PC-9 (cell line): ENCODE measurements at regions of chr15 and their contacts with region 1.

Region 1: DNA sequence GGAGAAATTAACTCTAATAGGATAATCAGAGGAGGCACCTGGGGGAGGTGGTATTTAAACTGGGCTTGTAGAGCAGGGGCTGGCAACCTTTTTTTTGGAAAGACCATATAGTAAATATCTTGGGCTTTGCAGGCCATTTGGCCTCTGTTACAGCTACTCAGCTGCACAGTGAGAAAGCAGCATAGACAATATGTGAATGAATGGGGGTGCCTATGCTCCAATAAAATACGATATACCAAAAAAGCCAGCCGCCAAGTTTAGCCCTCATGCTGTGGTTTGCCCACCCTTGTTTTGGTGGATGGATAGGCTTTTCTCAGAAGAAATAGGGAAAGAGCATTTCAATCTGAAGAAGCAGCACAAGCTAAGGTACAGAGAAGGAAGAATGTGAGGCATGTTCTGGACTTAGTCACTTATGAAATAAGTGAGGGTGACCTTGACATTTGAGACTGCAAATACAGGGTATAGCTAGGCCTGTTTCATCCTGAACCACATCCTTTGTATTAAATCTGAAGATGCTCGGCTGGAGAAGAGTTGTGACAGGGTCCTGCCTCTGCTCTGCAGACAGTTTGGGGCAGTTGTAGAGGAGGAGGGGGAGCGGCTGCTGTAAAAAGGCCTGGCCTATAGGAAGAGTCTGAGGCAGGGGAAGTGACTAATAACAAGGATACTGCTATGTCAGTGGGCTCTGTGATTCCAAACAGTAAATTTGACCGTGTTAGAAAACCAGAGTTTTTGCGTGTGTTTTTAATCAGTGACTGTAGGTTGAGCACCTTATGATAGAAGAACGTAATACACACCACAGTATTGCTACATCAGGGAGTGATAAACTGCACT is 130.9 kb upstream of the NR2E3 start:
- DNase-seq: peak in 1 of 2 experiments; percentile 43
- H3K4me3 ChIP-seq: peak overlapping the region; percentile 42; the same call in 1 of the 2 replicates
- H3K27ac ChIP-seq: peak overlapping the region; percentile 78
- H3K4me1 ChIP-seq: peaks cover 59% of the 10 kb centered on the region
- H3K27me3 ChIP-seq: no peaks in the 10 kb centered on the region
- CTCF ChIP-seq: no peak

Region 2: GRCh38 chr15:71588746-71589145 is 90.7 kb before region 1 on chr15:
- CTCF ChIA-PET with region 1: no interaction called
- POLR2A ChIA-PET with region 1: no interaction called
- intact Hi-C with region 1: loop called (anchors 10 kb)
- DNase-seq: no peak
- H3K4me3 ChIP-seq: no peak overlapping the region
- H3K27ac ChIP-seq: no peak overlapping the region
- H3K4me1 ChIP-seq: peaks cover 3% of the 10 kb centered on the region; the same call in 1 of the 2 replicates
- H3K27me3 ChIP-seq: no peaks in the 10 kb centered on the region
- CTCF ChIP-seq: no peak

Region 3: DNA sequence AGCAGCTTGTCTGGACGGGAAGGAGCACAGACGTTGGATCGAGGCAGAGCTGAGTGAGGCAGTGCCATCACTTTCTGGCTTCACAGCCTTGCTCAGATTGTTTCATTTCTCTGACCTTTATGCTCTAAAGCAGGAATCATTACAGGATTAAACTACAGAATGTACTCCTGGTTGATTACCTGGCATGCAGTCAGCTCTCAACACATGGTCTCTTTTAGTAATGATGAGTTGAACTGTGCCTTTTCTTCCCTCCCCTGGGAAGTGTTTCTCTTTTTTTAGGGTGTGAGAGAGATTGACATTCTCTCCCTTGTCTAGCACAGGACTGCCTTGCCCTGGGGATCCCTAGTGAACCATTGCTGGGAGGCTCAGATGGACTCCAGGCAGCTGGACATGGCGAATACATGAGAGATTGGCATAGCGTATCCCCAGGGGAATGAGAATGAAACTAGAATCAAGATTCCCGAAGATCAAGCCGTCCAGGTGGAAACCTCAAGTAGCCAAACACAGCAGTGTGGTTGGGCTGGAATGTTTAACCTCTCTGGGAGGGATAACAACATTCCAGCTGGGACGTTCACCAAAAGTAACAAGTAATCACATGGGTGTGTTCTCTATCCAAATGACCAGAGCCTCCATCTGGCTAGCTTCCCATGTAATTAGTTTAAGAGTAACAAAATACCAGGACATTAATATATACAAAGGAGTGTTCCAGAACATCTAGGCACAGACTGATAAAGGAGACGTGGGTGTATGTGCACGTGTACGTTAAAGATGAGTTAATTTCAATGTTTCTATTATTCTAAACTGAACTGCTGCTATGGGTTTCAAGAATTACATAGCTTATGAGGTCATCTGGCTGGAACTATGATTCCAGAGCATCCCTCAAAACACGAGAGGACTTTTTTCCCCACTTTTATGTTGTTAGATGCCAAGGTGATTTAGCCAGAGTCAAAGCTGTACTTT is 12.3 kb after region 1 on chr15:
- CTCF ChIA-PET with region 1: no interaction called
- POLR2A ChIA-PET with region 1: no interaction called
- intact Hi-C with region 1: loop called (anchors 1 kb)
- DNase-seq: peak; percentile 51 to 68
- H3K4me3 ChIP-seq: no peak overlapping the region
- H3K27ac ChIP-seq: peak overlapping the region; percentile 34; the same call in 1 of the 2 replicates
- H3K4me1 ChIP-seq: peaks cover 10% of the 10 kb centered on the region
- H3K27me3 ChIP-seq: no peaks in the 10 kb centered on the region
- CTCF ChIP-seq: no peak

Region 4: GRCh38 chr15:71792521-71792920 is 113.1 kb after region 1 on chr15:
- CTCF ChIA-PET with region 1: no interaction called
- POLR2A ChIA-PET with region 1: no interaction called
- intact Hi-C with region 1: no loop called
- DNase-seq: peak; percentile 48 to 82
- H3K4me3 ChIP-seq: no peak overlapping the region
- H3K27ac ChIP-seq: peak overlapping the region; percentile 95
- H3K4me1 ChIP-seq: peaks cover 46% of the 10 kb centered on the region
- H3K27me3 ChIP-seq: no peaks in the 10 kb centered on the region
- CTCF ChIP-seq: no peak